ENCODE measurements at regions of chr16 and their contacts with region 1.

Region 1: DNA sequence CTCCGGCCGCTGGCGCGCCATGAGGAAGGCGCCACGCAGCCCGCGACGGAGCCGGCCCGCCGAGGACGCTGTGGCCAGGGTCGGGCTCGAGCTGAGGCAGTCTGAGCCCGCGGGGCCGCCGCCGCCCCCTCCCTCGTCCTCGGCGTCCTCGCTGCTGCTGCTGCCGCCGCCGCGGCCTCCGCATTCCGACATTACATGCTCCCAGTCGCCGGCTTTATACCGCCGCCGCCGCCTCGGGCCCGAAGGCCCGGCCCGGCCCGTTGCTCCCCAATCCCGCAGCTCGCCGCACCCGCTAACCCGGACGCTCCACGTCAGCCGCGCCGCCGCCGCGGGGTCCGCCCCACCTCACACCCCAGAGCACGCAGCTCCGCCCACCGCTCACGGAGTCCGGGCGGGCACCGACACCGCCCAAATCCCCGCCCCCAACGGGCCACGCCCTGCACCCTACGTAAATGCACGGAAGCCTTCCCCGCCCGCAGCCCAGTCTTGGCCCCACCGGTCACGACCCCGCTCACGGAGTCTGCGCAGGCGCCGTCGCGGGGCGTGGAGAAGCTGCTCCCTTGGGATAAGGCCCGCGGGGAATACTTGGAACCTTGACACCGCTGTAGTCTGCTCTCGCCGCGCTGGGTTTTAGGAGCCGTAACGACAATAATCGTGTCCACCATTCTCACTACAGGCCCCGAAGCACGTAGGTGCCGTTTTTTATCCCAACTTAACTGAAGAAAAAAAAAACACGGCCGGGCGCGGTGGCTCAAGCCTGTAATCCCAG is at the start of gene TXNDC11:
- DNase-seq: peak; percentile 100
- ATAC-seq: peak; percentile 90
- H3K4me3 Mint-ChIP-seq: peak within 1 kb of the TSS; percentile 96
- H3K27ac Mint-ChIP-seq: peak within 1 kb of the TSS; percentile 94
- H3K4me1 Mint-ChIP-seq: peaks cover 41% of the 10 kb centered on the region
- H3K27me3 Mint-ChIP-seq: no peaks in the 10 kb centered on the region
- total RNA-seq, gene TXNDC11: 30.7 to 38.3 TPM

Region 2: GRCh38 chr16:11670171-11671131 is 72.3 kb before region 1 on chr16:
- POLR2A ChIA-PET with region 1: interaction called, 10 read pairs
- DNase-seq: peak; percentile 67
- ATAC-seq: peak; percentile 57
- H3K4me3 Mint-ChIP-seq: peak overlapping the region; percentile 88
- H3K27ac Mint-ChIP-seq: peak overlapping the region; percentile 96
- H3K4me1 Mint-ChIP-seq: peaks cover 50% of the 10 kb centered on the region
- H3K27me3 Mint-ChIP-seq: no peaks in the 10 kb centered on the region

Region 3: DNA sequence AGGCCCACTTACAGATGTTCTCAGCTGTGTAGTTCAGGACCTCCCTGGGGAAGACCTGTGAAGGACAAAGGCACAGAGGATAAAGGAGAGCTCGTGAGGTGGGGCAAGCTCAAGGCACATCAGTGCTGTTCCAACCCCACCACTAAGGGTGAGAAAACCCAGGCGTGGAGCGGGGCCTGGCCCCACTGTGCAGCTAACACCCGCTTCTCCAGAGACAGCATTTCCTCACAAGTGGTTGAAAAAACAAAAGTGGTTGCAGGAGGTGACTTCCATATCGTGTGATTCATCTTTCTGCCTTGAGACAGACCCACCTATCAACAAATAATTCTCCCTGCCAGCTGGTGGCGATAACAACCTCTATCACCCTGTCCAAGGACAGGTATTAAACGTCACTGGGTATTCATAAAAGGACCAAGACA is 44.4 kb before region 1 on chr16:
- POLR2A ChIA-PET with region 1: no interaction called
- DNase-seq: no peak
- ATAC-seq: peak; percentile 61
- H3K4me3 Mint-ChIP-seq: peak overlapping the region; percentile 36
- H3K27ac Mint-ChIP-seq: peak overlapping the region; percentile 62
- H3K4me1 Mint-ChIP-seq: peaks cover 39% of the 10 kb centered on the region
- H3K27me3 Mint-ChIP-seq: no peaks in the 10 kb centered on the region

Region 4: DNA sequence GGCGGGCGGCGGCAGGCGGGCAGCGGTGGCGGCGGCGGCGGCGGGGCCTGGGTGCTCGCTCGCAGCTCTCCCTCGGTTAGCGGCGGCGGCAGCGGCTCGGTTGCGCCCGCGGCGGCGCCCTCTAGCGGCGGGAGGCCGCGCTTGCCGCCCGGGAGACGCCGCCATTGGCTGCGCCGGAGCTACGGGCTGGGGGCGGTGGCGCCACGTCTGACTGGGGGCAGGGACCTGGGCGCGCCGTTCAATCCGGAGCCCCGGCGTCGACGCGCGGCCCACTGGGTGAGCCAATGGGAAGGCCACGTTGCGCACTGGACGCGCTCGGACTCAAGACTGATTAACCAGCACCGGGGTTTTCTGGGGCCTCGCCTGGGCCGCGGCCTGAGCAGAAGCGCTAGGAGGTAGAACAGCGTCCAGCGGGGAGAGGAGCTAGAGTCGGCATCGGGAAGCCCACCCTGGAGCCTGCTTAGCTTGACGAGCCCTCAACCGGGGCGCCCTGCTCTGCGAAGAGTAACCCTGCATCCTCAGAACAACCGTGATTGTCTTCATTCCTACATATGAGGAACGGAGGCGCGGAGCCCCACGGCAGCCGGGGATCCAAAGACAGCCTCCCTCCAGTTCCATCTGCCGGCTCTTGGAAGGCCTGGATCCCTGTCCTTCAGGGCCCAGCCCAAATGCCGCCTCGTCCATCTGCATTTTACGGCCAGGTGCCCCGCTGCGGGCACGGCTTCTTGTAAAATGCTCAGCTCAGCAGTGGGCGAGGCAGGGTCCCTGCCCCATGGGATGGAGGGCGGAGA is 54.6 kb after region 1 on chr16 and contains the start of gene ZC3H7A:
- POLR2A ChIA-PET with region 1: interaction called, 36 read pairs
- DNase-seq: peak; percentile 98
- ATAC-seq: peak; percentile 99
- H3K4me3 Mint-ChIP-seq: peak within 1 kb of the TSS; percentile 91
- H3K27ac Mint-ChIP-seq: peak within 1 kb of the TSS; percentile 90
- H3K4me1 Mint-ChIP-seq: peaks cover 63% of the 10 kb centered on the region
- H3K27me3 Mint-ChIP-seq: no peaks in the 10 kb centered on the region
- total RNA-seq, gene ZC3H7A: 73.1 to 82.5 TPM